Panc1 (cell line): ENCODE measurements at regions of chr15 and their contacts with region 1.

Region 1: GRCh38 chr15:60070838-60071493 is 66.9 kb downstream of the FOXB1 start:
- DNase-seq: peak; percentile 61
- ATAC-seq: peak; percentile 94
- H3K4me3 ChIP-seq: peak overlapping the region in 1 of 2 experiments; percentile 27; a peak in 2 of 4 replicates
- H3K27ac ChIP-seq: peak overlapping the region; percentile 68
- H3K4me1 ChIP-seq: peaks cover 14% of the 10 kb centered on the region; the same call in 1 of the 2 replicates
- H3K27me3 ChIP-seq: no peaks in the 10 kb centered on the region
- CTCF ChIP-seq: no peak

Region 2: DNA sequence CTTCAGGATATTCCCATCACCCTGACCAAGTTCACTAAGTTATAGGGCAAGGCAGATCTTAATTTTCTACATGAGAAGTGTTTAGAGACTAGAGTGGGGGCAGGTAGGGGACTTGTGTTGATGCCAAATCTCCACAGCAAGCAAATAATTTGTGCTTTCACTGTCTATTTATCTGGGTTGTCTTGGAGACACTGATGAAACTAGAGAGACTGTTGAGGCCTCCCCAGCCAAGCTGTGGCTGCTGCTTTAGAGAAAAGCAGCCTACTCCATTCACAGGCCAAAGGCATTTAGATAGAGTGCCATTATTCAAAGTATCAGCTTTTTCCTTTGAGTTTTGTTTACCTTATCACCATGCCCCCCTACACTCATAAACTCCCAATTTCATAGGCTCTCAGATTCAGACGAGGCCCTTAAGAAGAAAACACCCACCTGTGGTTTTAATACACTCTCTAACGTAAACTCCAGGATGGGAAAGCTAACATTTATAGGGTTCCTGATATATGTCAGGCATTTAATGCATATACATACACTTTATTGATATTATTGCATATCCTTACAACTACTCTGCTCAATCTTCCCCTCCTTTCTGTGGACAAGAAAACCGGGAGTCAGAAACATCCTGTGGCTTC is 197.2 kb before region 1 on chr15:
- CTCF ChIA-PET with region 1: no interaction called
- POLR2A ChIA-PET with region 1: no interaction called
- in situ Hi-C with region 1: no loop called
- intact Hi-C with region 1: no loop called
- DNase-seq: no peak
- ATAC-seq: no peak
- H3K4me3 ChIP-seq: no peak overlapping the region
- H3K27ac ChIP-seq: no peak overlapping the region
- H3K4me1 ChIP-seq: no peaks in the 10 kb centered on the region
- H3K27me3 ChIP-seq: peaks cover 15% of the 10 kb centered on the region
- CTCF ChIP-seq: no peak

Region 3: DNA sequence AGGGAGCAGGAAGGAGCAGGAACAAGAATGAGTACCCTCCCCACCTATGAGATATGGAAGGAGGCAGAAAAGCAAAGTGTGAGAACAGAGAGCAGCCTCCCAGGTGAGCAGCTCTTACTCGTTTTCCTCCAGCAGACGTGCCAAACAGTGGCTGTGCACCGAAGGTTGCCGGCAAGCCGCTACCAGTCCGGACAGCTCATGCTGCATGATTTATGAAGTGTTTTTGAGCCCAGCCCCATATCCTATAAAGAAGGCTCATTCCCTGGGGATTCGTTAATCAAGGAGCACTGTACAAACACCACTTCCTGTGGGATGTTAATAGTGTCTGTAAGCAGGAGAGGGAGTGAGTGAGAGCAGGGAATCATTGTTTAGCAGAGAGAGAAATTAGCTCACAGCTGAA is 185.1 kb before region 1 on chr15:
- CTCF ChIA-PET with region 1: interaction called, 10 read pairs
- POLR2A ChIA-PET with region 1: no interaction called
- in situ Hi-C with region 1: no loop called
- intact Hi-C with region 1: no loop called
- DNase-seq: no peak
- ATAC-seq: peak; percentile 56
- H3K4me3 ChIP-seq: no peak overlapping the region
- H3K27ac ChIP-seq: no peak overlapping the region
- H3K4me1 ChIP-seq: no peaks in the 10 kb centered on the region
- H3K27me3 ChIP-seq: no peaks in the 10 kb centered on the region
- CTCF ChIP-seq: no peak

Region 4: DNA sequence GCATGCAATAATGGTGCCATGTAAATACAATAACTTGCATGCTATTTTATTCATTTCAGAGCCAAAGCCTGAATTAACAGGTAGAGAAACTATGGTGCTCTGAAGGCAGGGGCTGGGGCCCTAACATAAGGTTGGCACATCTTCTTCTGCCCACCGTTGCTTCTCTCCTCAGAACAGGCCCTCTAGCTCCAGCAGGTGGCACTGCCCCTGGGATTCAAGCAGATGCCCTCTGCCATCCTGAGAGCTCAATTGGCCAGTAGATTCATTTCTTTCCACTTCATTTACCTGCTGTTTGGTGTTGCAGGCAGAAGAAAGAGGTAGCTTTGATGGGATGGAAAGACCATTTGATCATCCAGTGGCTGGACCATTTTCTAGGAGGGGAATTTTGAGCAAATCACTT is 63.6 kb after region 1 on chr15:
- CTCF ChIA-PET with region 1: no interaction called
- POLR2A ChIA-PET with region 1: no interaction called
- in situ Hi-C with region 1: no loop called
- intact Hi-C with region 1: no loop called
- DNase-seq: no peak
- ATAC-seq: peak; percentile 68; the same call in 1 of the 2 replicates
- H3K4me3 ChIP-seq: no peak overlapping the region
- H3K27ac ChIP-seq: no peak overlapping the region
- H3K4me1 ChIP-seq: no peaks in the 10 kb centered on the region
- H3K27me3 ChIP-seq: no peaks in the 10 kb centered on the region
- CTCF ChIP-seq: peak; percentile 61